B cell (primary cell): ENCODE measurements at regions of chr20 and their contacts with region 1.

Region 1: DNA sequence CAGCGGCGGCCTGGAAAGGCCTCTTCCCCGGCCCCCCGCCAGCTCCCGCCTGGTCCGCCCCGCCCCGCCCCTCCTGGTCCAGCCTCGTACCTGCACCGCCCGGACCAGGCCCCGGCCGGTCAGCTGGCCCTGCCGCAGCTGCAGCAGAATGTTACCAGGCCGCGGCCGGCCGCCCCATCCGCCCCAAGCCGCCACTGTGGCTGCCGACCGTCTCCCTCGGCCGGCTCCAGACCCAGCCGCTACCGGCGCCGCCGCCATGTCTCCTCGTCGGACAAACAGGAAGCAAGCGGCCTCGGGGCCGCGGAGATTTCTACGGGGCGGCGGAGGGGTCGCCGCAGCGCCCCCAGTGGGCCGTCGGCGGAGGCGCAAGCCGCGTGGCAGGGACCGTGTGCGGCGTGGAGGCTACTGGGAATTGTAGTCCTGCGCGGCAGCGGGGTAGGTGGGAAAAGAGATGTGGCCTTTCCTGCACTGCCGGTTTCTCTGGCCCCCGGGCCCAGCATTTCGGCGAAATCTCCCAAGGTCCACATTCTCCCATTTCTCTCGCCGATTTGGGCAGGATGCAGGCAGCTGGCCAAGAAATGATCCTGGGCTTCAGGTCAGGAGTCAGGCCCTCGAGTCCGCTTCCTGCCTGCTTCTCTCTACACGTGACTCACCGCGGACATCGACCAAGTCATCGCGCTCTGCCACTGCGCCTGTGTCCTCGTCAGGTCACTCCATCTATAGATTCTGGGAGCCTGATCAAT is at the start of gene TRPC4AP:
- DNase-seq: peak; percentile 95
- ATAC-seq: peak; percentile 98
- H3K4me3 ChIP-seq: peak within 1 kb of the TSS; percentile 77 to 98 (median 86)
- H3K4me3 Mint-ChIP-seq: peak within 1 kb of the TSS; percentile 97
- H3K27ac ChIP-seq: peak within 1 kb of the TSS; percentile 58 to 89
- H3K27ac Mint-ChIP-seq: peak within 1 kb of the TSS; percentile 95
- H3K4me1 ChIP-seq: peaks cover 16 to 22% of the 10 kb centered on the region in 2 donors
- H3K4me1 Mint-ChIP-seq: peaks cover 47% of the 10 kb centered on the region
- H3K27me3 ChIP-seq: no peaks in the 10 kb centered on the region
- H3K27me3 Mint-ChIP-seq: no peaks in the 10 kb centered on the region
- CTCF ChIP-seq: peak; percentile 91
- total RNA-seq, gene TRPC4AP: 73.2 and 73.9 TPM in 2 replicates

Region 2: GRCh38 chr20:34825530-34826362 is 266.9 kb before region 1 on chr20 and contains the start of gene NCOA6:
- CTCF ChIA-PET with region 1: no interaction called
- POLR2A ChIA-PET with region 1: no interaction called
- intact Hi-C with region 1: loop called (anchors 1 kb)
- DNase-seq: peak; percentile 88
- ATAC-seq: peak; percentile 74
- H3K4me3 ChIP-seq: peak within 1 kb of the TSS; percentile 68 to 94 (median 82)
- H3K4me3 Mint-ChIP-seq: peak within 1 kb of the TSS; percentile 94
- H3K27ac ChIP-seq: peak within 1 kb of the TSS; percentile 60 to 67
- H3K27ac Mint-ChIP-seq: peak within 1 kb of the TSS; percentile 92
- H3K4me1 ChIP-seq: peaks cover 19 to 21% of the 10 kb centered on the region in 2 donors
- H3K4me1 Mint-ChIP-seq: peaks cover 31% of the 10 kb centered on the region
- H3K27me3 ChIP-seq: no peaks in the 10 kb centered on the region
- H3K27me3 Mint-ChIP-seq: peaks cover 3% of the 10 kb centered on the region
- CTCF ChIP-seq: no peak
- total RNA-seq, gene NCOA6: 31.0 and 31.9 TPM in 2 replicates

Region 3: DNA sequence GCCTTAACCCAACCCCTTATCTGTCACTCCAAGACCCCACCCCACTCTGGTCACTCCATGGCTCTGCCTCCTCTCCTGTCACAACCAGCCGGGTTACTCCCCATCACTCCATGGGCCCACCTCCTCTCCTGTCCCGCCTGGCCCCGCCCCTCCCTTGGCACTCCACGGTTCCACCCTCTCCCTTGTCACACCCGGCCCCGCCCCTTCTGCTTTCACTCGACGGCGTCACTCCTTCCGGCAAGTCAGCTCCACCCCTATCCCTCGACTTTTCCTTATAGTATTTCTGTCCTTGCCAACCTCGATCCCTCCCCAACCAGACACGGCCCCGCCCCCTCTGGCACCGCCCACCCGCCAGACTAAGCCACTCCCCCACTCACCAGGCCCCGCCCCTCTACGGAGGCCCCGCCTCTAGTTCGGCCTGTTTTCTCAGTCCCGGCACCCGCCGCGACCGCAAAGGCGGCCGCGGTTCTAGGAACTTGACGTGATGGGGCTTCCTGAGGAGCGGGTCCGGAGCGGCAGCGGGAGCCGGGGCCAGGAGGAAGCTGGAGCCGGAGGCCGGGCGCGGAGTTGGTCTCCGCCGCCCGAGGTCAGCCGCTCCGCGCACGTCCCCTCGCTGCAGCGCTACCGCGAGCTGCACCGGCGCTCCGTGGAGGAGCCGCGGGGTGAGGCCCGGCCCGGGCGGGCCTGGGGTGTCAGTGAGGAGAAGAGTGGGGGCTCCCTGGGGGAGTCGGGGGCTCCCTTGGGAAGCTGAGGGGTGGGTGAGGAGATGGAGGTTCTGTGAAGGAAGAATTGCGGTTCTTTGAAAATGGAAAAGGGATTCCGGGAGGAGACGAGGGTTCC is 216.3 kb before region 1 on chr20 and contains the start of gene ACSS2:
- CTCF ChIA-PET with region 1: interaction called, 4 read pairs
- POLR2A ChIA-PET with region 1: no interaction called
- intact Hi-C with region 1: loop called (anchors 1 kb)
- DNase-seq: peak; percentile 94
- ATAC-seq: peak; percentile 87
- H3K4me3 ChIP-seq: peak within 1 kb of the TSS; percentile 54 to 80 (median 69)
- H3K4me3 Mint-ChIP-seq: peak within 1 kb of the TSS; percentile 92
- H3K27ac ChIP-seq: peak within 1 kb of the TSS in 1 of 2 donors; percentile 56
- H3K27ac Mint-ChIP-seq: peak within 1 kb of the TSS; percentile 81
- H3K4me1 ChIP-seq: peaks cover 35 to 41% of the 10 kb centered on the region in 2 donors
- H3K4me1 Mint-ChIP-seq: peaks cover 47% of the 10 kb centered on the region
- H3K27me3 ChIP-seq: no peaks in the 10 kb centered on the region
- H3K27me3 Mint-ChIP-seq: no peaks in the 10 kb centered on the region
- CTCF ChIP-seq: no peak
- total RNA-seq, gene ACSS2: 14.7 and 22.1 TPM in 2 replicates

Region 4: GRCh38 chr20:35063168-35063567 is 29.5 kb before region 1 on chr20:
- CTCF ChIA-PET with region 1: interaction called, 12 read pairs
- POLR2A ChIA-PET with region 1: no interaction called
- intact Hi-C with region 1: no loop called
- DNase-seq: no peak
- ATAC-seq: no peak
- H3K4me3 ChIP-seq: no peak overlapping the region
- H3K4me3 Mint-ChIP-seq: no peak overlapping the region
- H3K27ac ChIP-seq: no peak overlapping the region
- H3K27ac Mint-ChIP-seq: no peak overlapping the region
- H3K4me1 ChIP-seq: no peaks in the 10 kb centered on the region
- H3K4me1 Mint-ChIP-seq: peaks cover 26% of the 10 kb centered on the region
- H3K27me3 ChIP-seq: no peaks in the 10 kb centered on the region
- H3K27me3 Mint-ChIP-seq: no peaks in the 10 kb centered on the region
- CTCF ChIP-seq: no peak

Region 5: GRCh38 chr20:35120012-35120701 is 27.5 kb after region 1 on chr20:
- CTCF ChIA-PET with region 1: interaction called, 11 read pairs
- POLR2A ChIA-PET with region 1: no interaction called
- intact Hi-C with region 1: no loop called
- DNase-seq: no peak
- ATAC-seq: no peak
- H3K4me3 ChIP-seq: no peak overlapping the region
- H3K4me3 Mint-ChIP-seq: no peak overlapping the region
- H3K27ac ChIP-seq: no peak overlapping the region
- H3K27ac Mint-ChIP-seq: peak overlapping the region; percentile 46
- H3K4me1 ChIP-seq: no peaks in the 10 kb centered on the region
- H3K4me1 Mint-ChIP-seq: no peaks in the 10 kb centered on the region
- H3K27me3 ChIP-seq: no peaks in the 10 kb centered on the region
- H3K27me3 Mint-ChIP-seq: no peaks in the 10 kb centered on the region
- CTCF ChIP-seq: no peak

Region 6: DNA sequence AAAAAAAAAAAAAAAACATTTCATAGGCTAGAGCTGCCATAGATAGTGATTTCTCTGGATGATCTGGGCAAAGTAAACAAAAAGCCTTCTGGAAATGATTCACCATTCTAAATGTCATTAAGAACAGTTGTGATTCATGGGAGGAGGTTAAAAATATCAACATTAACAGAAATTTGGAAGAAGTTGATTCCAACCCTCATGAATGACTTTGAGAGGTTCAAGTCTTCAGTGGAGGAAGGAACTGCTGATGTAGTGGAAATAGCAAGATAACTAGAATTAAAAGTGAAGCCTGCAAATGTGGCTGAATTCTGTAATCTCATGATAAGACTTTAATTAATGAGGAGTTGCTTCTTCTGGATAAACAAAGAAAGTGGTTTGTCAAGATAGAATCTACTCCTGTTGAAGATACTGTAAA is 107.1 kb after region 1 on chr20:
- CTCF ChIA-PET with region 1: interaction called, 15 read pairs
- POLR2A ChIA-PET with region 1: no interaction called
- intact Hi-C with region 1: no loop called
- DNase-seq: no peak
- ATAC-seq: no peak
- H3K4me3 ChIP-seq: no peak overlapping the region
- H3K4me3 Mint-ChIP-seq: no peak overlapping the region
- H3K27ac ChIP-seq: no peak overlapping the region
- H3K27ac Mint-ChIP-seq: no peak overlapping the region
- H3K4me1 ChIP-seq: no peaks in the 10 kb centered on the region
- H3K4me1 Mint-ChIP-seq: no peaks in the 10 kb centered on the region
- H3K27me3 ChIP-seq: no peaks in the 10 kb centered on the region
- H3K27me3 Mint-ChIP-seq: no peaks in the 10 kb centered on the region
- CTCF ChIP-seq: no peak

Region 7: GRCh38 chr20:35277531-35278395 is 185.1 kb after region 1 on chr20 and contains the start of gene MMP24OS:
- CTCF ChIA-PET with region 1: interaction called, 5 read pairs
- POLR2A ChIA-PET with region 1: interaction called, 7 read pairs
- intact Hi-C with region 1: loop called (anchors 1 kb)
- DNase-seq: peak; percentile 95
- ATAC-seq: peak; percentile 90
- H3K4me3 ChIP-seq: peak within 1 kb of the TSS; percentile 70 to 86 (median 77)
- H3K4me3 Mint-ChIP-seq: peak within 1 kb of the TSS; percentile 94
- H3K27ac ChIP-seq: peak within 1 kb of the TSS; percentile 92 to 96
- H3K27ac Mint-ChIP-seq: peak within 1 kb of the TSS; percentile 99
- H3K4me1 ChIP-seq: peaks cover 14 to 21% of the 10 kb centered on the region in 2 donors
- H3K4me1 Mint-ChIP-seq: peaks cover 20% of the 10 kb centered on the region
- H3K27me3 ChIP-seq: no peaks in the 10 kb centered on the region
- H3K27me3 Mint-ChIP-seq: no peaks in the 10 kb centered on the region
- CTCF ChIP-seq: peak; percentile 22
- total RNA-seq, gene MMP24OS: 57.0 and 66.9 TPM in 2 replicates